Posterior vena cava (tissue), 2 donors: ENCODE measurements at regions of chr2 and their contacts with region 1.

Region 1: GRCh38 chr2:71798266-71799012 is 345.1 kb downstream of the DYSF start:
- DNase-seq: no peak

Region 2: GRCh38 chr2:70480468-70480867 is 1318.0 kb before region 1 on chr2:
- intact Hi-C with region 1: no loop called
- DNase-seq: no peak

Region 3: DNA sequence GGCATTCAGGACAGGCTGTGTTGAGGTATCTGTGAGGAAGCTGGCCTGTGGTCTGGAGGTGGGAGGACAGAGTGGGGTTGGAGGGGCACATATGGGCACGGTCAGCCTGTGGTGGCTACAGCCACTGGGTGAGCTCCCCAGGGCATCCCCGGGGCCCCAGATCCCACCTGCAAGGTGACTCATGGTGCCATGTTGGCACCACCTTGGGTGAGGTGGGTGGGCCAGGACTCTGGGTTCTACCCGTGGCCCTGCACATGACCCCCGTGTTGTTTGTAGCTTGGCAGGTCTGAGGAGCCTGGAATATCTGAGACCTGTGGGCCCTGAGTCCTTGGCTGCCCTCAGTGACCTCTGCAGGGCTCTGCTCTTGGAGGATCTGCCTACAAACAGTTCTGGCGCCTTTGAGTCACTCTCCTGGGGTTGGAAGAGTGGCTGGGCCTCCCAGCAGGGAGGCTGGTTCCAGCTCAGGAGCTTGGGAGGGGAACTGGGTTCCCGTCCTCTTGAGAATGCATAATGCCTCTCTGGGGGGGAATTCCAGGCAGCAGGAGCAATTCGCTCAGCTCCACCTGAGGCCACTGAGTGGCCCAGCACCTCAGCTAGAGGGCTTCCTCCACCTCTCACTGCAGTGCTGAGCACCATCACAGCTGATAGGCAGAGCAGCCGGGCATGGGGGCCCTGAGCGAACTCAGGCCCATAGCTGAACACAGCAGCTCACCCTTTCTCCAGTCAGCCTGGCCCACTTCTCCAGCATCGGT is 240.0 kb before region 1 on chr2:
- intact Hi-C with region 1: loop called in 1 of 2 experiments (anchors 5 kb)
- DNase-seq: no peak

Region 4: DNA sequence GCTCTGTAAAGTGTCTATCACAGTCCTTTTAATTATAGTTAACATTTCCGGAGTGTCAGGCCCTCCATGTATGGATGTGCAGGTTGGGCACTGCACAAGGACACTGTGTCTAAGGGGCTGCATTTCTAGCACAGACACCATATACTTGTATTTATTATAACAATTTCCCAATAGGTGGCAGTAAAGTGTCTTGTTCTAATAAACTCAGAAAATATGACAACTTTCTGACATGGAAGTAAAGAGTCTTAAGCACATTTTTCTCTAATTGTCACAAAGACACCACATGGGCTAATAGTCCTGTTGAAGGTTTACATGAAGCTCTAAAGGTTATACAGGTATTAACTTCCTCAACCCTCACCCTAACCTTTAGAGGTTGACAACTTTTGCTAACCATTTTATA is 188.5 kb before region 1 on chr2:
- intact Hi-C with region 1: loop called (anchors 5 to 10 kb)
- DNase-seq: no peak

Region 5: DNA sequence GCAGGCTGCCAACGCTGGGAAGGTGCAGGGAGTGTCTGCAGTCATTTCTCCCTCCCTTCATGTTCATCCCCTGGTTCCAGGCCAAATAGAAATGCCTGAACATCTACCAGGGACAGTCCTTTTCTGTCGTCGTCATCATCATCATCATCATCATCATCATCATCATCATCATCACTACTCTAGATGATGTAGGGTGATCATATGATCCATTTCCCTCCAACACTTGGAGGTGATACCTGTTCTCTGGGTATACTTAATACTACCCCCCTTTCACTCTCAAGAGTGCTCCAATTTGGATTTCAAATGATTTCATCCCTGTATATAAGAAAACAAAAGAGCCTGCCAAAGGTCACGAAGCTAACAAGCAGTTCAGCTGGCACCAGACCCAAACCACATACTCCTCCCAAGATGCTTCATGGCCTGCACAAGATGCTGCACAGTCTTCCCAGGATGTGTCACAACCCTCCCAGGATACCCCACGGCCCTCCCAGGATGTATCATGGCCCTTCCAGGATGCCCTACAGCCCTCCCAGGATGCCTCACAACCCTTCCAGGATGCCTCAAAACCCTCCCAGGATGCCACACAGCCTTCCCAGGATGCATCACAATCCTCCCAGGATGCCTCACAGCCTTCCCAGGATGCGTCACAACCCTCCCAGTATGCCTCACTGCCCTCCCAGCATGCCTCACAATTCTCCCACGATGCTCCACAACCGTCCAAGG is 87.1 kb before region 1 on chr2:
- intact Hi-C with region 1: loop called in 1 of 2 experiments (anchors 5 kb)
- DNase-seq: no peak

Region 6: GRCh38 chr2:71759060-71759459 is 39.4 kb before region 1 on chr2:
- intact Hi-C with region 1: no loop called
- DNase-seq: no peak

Region 7: DNA sequence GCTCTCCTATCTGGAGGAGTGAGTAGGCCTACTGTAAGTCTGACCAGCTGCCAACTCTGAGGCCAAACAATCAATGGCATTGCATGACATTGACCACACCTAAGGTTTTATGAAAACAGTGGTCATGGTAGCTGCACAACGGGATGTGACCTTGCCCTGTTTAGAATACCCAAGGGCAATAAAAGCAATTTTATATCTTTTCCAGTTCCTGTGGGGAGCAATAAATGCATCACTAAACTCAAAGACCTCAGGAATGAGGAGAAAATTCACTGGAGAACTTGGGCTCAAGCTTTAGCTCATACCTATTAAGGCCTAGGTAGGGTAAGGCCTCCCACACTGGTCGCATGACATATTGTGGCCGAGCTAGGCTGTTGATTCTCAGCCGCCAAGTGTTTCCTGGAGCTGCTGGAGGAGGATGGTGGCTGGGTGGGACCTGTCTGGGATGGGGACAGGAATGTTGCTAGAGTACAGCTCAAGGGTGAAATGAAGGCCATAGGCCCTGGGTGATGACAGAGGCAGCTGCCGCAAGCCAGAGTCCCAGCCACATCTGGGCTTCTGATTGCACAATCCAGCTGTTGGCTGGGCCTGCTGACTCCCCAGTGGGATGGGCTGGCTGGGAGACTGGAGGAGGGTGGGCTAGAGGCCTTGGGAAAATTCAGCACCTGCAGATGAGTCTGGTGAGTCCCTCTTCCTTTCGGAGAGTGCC is 35.6 kb after region 1 on chr2:
- intact Hi-C with region 1: no loop called
- DNase-seq: peak; percentile 87

Region 8: GRCh38 chr2:71846669-71847291 is 48.3 kb after region 1 on chr2:
- intact Hi-C with region 1: no loop called
- DNase-seq: no peak

Region 9: GRCh38 chr2:71995067-71995665 is 196.7 kb after region 1 on chr2:
- intact Hi-C with region 1: loop called in 1 of 2 experiments (anchors 5 kb)
- DNase-seq: no peak